Caco-2 (cell line): ENCODE measurements at regions of chr3 and their contacts with region 1.

Region 1: GRCh38 chr3:27712136-27713077 is 9.7 kb downstream of the EOMES start:
- DNase-seq: peak; percentile 73 to 78
- H3K4me3 ChIP-seq: peak overlapping the region; percentile 31
- H3K4me3 Mint-ChIP-seq: peak overlapping the region; percentile 82
- H3K27ac Mint-ChIP-seq: no peak overlapping the region
- H3K4me1 ChIP-seq: peaks cover 18% of the 10 kb centered on the region; the same call in 1 of the 2 replicates
- H3K4me1 Mint-ChIP-seq: peaks cover 24% of the 10 kb centered on the region
- H3K27me3 ChIP-seq: peaks cover 5% of the 10 kb centered on the region
- H3K27me3 Mint-ChIP-seq: peaks cover 38% of the 10 kb centered on the region
- CTCF ChIP-seq: peak; percentile 74 to 87

Region 2: DNA sequence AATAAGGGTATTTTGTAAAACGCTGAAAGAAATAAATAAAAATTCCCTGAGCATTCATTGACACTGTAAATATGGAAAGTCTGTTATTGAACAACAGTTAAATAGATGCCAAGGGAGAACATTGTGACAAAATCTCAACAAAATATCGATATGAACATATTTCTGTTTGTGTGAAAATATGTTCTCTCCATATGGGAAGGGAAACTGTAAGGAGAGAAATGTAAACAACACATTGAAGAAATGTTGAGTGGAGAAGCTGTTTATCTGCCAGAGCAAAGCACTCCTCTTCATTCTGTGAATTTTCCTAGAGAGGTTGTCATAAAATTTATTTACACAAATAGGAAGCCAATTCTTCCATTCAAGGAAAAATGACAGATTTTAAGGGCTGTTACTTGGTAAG is 66.8 kb after region 1 on chr3:
- CTCF ChIA-PET with region 1: no interaction called
- POLR2A ChIA-PET with region 1: no interaction called
- intact Hi-C with region 1: no loop called
- DNase-seq: no peak
- H3K4me3 ChIP-seq: no peak overlapping the region
- H3K4me3 Mint-ChIP-seq: no peak overlapping the region
- H3K27ac Mint-ChIP-seq: no peak overlapping the region
- H3K4me1 ChIP-seq: no peaks in the 10 kb centered on the region
- H3K4me1 Mint-ChIP-seq: no peaks in the 10 kb centered on the region
- H3K27me3 ChIP-seq: no peaks in the 10 kb centered on the region
- H3K27me3 Mint-ChIP-seq: peaks cover 11% of the 10 kb centered on the region
- CTCF ChIP-seq: no peak

Region 3: GRCh38 chr3:27827041-27827440 is 114.6 kb after region 1 on chr3:
- CTCF ChIA-PET with region 1: interaction called, 3 read pairs
- POLR2A ChIA-PET with region 1: no interaction called
- intact Hi-C with region 1: loop called (anchors 10 kb)
- DNase-seq: no peak
- H3K4me3 ChIP-seq: no peak overlapping the region
- H3K4me3 Mint-ChIP-seq: no peak overlapping the region
- H3K27ac Mint-ChIP-seq: no peak overlapping the region
- H3K4me1 ChIP-seq: peaks cover 6% of the 10 kb centered on the region; the same call in 1 of the 2 replicates
- H3K4me1 Mint-ChIP-seq: no peaks in the 10 kb centered on the region
- H3K27me3 ChIP-seq: no peaks in the 10 kb centered on the region
- H3K27me3 Mint-ChIP-seq: no peaks in the 10 kb centered on the region
- CTCF ChIP-seq: no peak

Region 4: DNA sequence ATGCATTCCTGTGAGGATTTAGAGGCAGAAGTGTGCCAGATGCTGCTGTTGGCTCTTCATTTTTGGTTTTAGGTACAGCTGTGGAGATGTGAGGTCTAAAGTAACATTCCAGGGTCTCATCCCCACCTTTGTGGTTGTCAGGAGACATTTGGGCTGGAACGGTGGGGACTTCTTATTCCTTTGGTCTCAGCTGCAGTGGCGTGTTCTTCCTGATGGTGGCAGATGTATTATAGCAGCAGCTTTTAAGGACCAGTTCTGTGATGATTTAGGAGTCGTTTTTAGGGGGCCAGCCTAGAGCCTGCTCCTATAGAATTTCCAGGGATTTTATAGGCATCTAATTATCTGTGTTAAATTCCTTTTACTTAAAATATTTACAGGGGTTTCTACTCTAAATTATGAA is 230.7 kb after region 1 on chr3:
- CTCF ChIA-PET with region 1: no interaction called
- POLR2A ChIA-PET with region 1: no interaction called
- intact Hi-C with region 1: loop called (anchors 5 kb)
- DNase-seq: peak in 1 of 2 experiments; percentile 20
- H3K4me3 ChIP-seq: no peak overlapping the region
- H3K4me3 Mint-ChIP-seq: no peak overlapping the region
- H3K27ac Mint-ChIP-seq: no peak overlapping the region
- H3K4me1 ChIP-seq: no peaks in the 10 kb centered on the region
- H3K4me1 Mint-ChIP-seq: no peaks in the 10 kb centered on the region
- H3K27me3 ChIP-seq: no peaks in the 10 kb centered on the region
- H3K27me3 Mint-ChIP-seq: peaks cover 2% of the 10 kb centered on the region
- CTCF ChIP-seq: peak; percentile 19 to 44

Region 5: DNA sequence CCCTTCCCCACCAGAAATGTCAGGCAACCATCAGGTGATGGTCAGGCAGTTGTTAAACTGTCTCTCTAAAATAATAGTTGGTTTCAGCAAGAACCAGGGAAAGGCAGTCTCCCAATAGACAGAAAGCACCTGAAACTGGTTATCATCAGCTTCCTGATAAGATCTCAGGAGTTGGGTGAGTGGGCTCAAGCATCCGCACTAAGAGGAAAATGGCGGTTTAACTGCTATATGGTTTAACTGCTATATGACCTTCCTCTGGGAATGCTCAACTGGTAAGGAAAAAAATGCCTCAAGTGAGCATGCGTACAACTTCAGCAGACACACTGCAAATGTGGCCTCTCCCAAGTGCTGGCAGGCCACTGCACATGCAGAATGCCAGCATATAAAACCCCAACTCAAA is 288.2 kb after region 1 on chr3:
- CTCF ChIA-PET with region 1: no interaction called
- POLR2A ChIA-PET with region 1: no interaction called
- intact Hi-C with region 1: no loop called
- DNase-seq: no peak
- H3K4me3 ChIP-seq: no peak overlapping the region
- H3K4me3 Mint-ChIP-seq: no peak overlapping the region
- H3K27ac Mint-ChIP-seq: no peak overlapping the region
- H3K4me1 ChIP-seq: no peaks in the 10 kb centered on the region
- H3K4me1 Mint-ChIP-seq: no peaks in the 10 kb centered on the region
- H3K27me3 ChIP-seq: no peaks in the 10 kb centered on the region
- H3K27me3 Mint-ChIP-seq: no peaks in the 10 kb centered on the region
- CTCF ChIP-seq: no peak

Region 6: GRCh38 chr3:28104896-28105534 is 392.6 kb after region 1 on chr3:
- CTCF ChIA-PET with region 1: no interaction called
- POLR2A ChIA-PET with region 1: no interaction called
- intact Hi-C with region 1: no loop called
- DNase-seq: no peak
- H3K4me3 ChIP-seq: no peak overlapping the region
- H3K4me3 Mint-ChIP-seq: no peak overlapping the region
- H3K27ac Mint-ChIP-seq: no peak overlapping the region
- H3K4me1 ChIP-seq: no peaks in the 10 kb centered on the region
- H3K4me1 Mint-ChIP-seq: no peaks in the 10 kb centered on the region
- H3K27me3 ChIP-seq: no peaks in the 10 kb centered on the region; the same call in 1 of the 2 replicates
- H3K27me3 Mint-ChIP-seq: no peaks in the 10 kb centered on the region
- CTCF ChIP-seq: no peak

Region 7: GRCh38 chr3:28241221-28242160 is 529.1 kb after region 1 on chr3 and contains the start of gene CMC1:
- CTCF ChIA-PET with region 1: interaction called, 6 read pairs
- POLR2A ChIA-PET with region 1: no interaction called
- intact Hi-C with region 1: loop called (anchors 2 kb)
- DNase-seq: peak; percentile 97 to 98
- H3K4me3 ChIP-seq: peak within 1 kb of the TSS; percentile 74
- H3K4me3 Mint-ChIP-seq: peak within 1 kb of the TSS; percentile 88
- H3K27ac Mint-ChIP-seq: peak within 1 kb of the TSS; percentile 80
- H3K4me1 ChIP-seq: peaks cover 17% of the 10 kb centered on the region
- H3K4me1 Mint-ChIP-seq: peaks cover 33% of the 10 kb centered on the region
- H3K27me3 ChIP-seq: no peaks in the 10 kb centered on the region
- H3K27me3 Mint-ChIP-seq: no peaks in the 10 kb centered on the region
- CTCF ChIP-seq: no peak
- total RNA-seq, gene CMC1: 22.8 and 23.7 TPM in 2 replicates

Region 8: GRCh38 chr3:28328188-28329151 is 616.1 kb after region 1 on chr3:
- CTCF ChIA-PET with region 1: interaction called, 19 read pairs
- POLR2A ChIA-PET with region 1: no interaction called
- intact Hi-C with region 1: loop called (anchors 1 kb)
- DNase-seq: peak in 1 of 2 experiments; percentile 8
- H3K4me3 ChIP-seq: no peak overlapping the region
- H3K4me3 Mint-ChIP-seq: no peak overlapping the region
- H3K27ac Mint-ChIP-seq: no peak overlapping the region
- H3K4me1 ChIP-seq: no peaks in the 10 kb centered on the region
- H3K4me1 Mint-ChIP-seq: no peaks in the 10 kb centered on the region
- H3K27me3 ChIP-seq: no peaks in the 10 kb centered on the region
- H3K27me3 Mint-ChIP-seq: no peaks in the 10 kb centered on the region
- CTCF ChIP-seq: peak in 1 of 2 experiments; percentile 54